Activated CD4-positive, alpha-beta memory T cell treated with anti-CD3 and anti-CD28 coated beads for 36 hours (primary cell): ENCODE measurements at regions of chr2 and their contacts with region 1.

Region 1: DNA sequence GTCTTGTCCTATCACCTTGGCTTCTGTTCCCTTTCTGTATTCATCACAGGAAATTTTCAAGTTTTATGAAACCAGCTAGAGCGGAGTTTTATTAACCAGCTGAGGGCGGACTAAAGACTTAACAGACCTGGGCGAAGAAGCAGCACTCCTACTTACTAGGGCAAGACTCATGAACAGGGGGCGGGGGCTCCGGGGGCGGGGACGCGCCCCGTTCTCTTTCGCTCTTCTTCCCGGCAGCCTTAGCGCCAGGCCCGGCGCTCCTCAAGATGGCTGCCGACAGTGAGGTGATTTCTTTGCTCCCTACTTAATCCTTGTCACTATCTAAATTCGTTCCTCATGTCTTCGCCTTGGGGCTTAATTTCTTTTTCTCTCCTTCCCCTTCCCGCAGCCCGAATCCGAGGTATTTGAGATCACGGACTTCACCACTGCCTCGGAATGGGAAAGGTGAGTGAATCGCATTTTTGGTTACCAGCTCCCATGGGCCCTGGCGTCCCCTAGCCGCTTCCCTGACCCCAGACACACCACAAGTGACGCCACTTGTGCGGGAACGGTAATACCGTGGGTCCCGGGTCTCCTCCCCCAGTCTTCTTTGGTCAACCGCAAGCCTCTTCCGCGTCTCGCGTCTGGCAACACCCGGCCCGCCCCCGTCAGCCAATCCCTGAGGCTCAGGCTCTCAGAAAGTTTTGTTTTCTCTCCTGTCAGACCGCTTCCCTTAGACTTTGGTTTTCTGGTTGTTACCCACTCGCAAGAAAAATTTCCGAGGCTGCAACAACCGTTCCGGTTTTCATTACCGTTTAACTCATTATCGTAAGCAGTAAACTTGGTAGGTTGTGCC is at the start of gene RAB3GAP1:
- DNase-seq: peak; percentile 97
- H3K4me3 Mint-ChIP-seq: peak within 1 kb of the TSS; percentile 98
- H3K27ac Mint-ChIP-seq: peak within 1 kb of the TSS; percentile 100
- H3K4me1 Mint-ChIP-seq: peaks cover 39% of the 10 kb centered on the region
- H3K27me3 Mint-ChIP-seq: no peaks in the 10 kb centered on the region
- total RNA-seq, gene RAB3GAP1: 29.6 to 30.7 TPM

Region 2: DNA sequence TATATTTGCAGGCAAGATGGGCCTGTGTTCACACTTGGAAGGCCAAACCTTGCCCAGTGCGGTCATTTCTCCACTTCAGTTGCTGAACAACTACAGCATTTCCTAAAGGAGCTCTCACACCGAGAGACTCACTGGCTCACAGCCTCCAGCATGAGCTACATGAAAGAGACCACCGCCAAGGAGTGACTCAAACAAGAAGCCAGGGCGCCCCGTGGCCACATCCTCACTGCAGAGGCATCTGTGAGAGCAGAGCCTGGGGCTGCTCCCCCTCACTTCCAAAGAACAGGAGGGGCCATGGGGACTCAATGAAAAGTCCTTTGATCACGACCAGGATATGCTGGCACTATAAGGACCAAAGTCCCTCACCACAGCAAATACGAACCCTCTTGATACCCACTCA is 383.4 kb before region 1 on chr2:
- CTCF ChIA-PET with region 1: no interaction called
- POLR2A ChIA-PET with region 1: no interaction called
- intact Hi-C with region 1: loop called (anchors 10 kb)
- DNase-seq: peak; percentile 95
- H3K4me3 Mint-ChIP-seq: no peak overlapping the region
- H3K27ac Mint-ChIP-seq: peak overlapping the region; percentile 13
- H3K4me1 Mint-ChIP-seq: peaks cover 65% of the 10 kb centered on the region
- H3K27me3 Mint-ChIP-seq: peaks cover 10% of the 10 kb centered on the region

Region 3: GRCh38 chr2:135010200-135010942 is 41.9 kb before region 1 on chr2:
- CTCF ChIA-PET with region 1: interaction called, 23 read pairs
- POLR2A ChIA-PET with region 1: interaction called, 5 read pairs
- intact Hi-C with region 1: loop called (anchors 1 kb)
- DNase-seq: no peak
- H3K4me3 Mint-ChIP-seq: no peak overlapping the region
- H3K27ac Mint-ChIP-seq: no peak overlapping the region
- H3K4me1 Mint-ChIP-seq: peaks cover 14% of the 10 kb centered on the region
- H3K27me3 Mint-ChIP-seq: peaks cover 16% of the 10 kb centered on the region

Region 4: DNA sequence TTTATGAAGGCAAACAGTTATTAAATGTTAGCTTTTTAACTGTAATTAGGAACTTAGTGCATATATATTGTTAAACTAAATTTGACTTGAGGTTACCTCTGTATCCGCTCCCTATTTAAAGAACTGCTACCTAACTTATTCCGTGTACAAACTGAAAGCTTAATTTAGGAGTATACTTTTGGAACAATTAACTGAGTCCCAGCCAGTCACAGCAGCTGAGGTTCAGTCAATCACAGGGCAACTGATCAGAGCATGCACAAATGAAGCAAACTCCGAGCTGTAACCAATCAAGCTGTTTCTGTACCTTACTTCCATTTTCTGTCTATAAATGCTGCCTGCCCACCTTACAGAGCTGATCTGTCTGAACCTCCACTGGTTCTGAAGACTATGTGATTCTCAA is 61.1 kb after region 1 on chr2:
- CTCF ChIA-PET with region 1: no interaction called
- POLR2A ChIA-PET with region 1: no interaction called
- intact Hi-C with region 1: no loop called
- DNase-seq: no peak
- H3K4me3 Mint-ChIP-seq: no peak overlapping the region
- H3K27ac Mint-ChIP-seq: no peak overlapping the region
- H3K4me1 Mint-ChIP-seq: no peaks in the 10 kb centered on the region
- H3K27me3 Mint-ChIP-seq: no peaks in the 10 kb centered on the region

Region 5: DNA sequence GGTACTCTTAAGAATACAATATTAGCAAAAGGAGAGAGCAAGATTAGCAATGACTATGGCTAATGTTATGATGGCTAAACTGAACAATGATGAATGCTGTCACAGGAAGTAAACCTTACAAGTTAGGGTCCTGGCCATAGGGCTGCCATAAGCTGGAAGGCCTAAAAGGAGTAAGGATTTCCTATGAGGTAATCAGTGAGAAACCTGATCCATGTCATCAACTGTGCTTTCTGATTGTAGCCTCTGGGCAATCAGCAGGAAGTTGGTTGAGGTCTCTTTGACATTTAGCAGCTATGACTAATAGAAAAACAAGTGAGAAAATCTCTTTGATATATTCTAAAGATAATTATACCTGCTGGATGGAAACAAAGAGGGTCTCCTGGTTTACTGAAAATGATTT is 192.8 kb after region 1 on chr2:
- CTCF ChIA-PET with region 1: no interaction called
- POLR2A ChIA-PET with region 1: no interaction called
- intact Hi-C with region 1: loop called (anchors 1 kb)
- DNase-seq: peak; percentile 20
- H3K4me3 Mint-ChIP-seq: no peak overlapping the region
- H3K27ac Mint-ChIP-seq: no peak overlapping the region
- H3K4me1 Mint-ChIP-seq: peaks cover 4% of the 10 kb centered on the region
- H3K27me3 Mint-ChIP-seq: no peaks in the 10 kb centered on the region

Region 6: GRCh38 chr2:135741395-135742324 is 689.4 kb after region 1 on chr2 and contains the start of gene UBXN4:
- CTCF ChIA-PET with region 1: interaction called, 3 read pairs
- POLR2A ChIA-PET with region 1: no interaction called
- intact Hi-C with region 1: loop called (anchors 1 kb)
- DNase-seq: peak; percentile 98
- H3K4me3 Mint-ChIP-seq: peak within 1 kb of the TSS; percentile 96
- H3K27ac Mint-ChIP-seq: peak within 1 kb of the TSS; percentile 99
- H3K4me1 Mint-ChIP-seq: peaks cover 24% of the 10 kb centered on the region
- H3K27me3 Mint-ChIP-seq: no peaks in the 10 kb centered on the region
- total RNA-seq, gene UBXN4: 107 TPM

Region 7: DNA sequence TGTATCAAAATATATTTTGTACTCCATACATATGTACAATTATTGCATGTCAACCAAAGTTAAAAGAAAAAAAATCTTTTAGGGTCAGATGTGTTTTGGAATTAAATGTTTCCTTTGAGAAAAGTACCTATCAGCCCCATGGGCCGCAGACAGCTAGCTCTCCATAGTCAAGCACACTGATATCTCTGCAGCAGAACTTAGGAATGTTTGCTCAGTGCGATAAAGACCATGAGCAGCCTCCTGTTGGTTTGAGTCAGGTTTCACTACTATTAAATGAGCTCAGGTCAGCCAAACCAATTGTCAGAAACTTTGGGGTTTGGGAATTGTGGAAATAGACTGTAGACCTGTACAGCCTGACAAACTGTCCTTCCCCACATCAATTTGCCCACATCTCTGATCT is 751.0 kb after region 1 on chr2:
- CTCF ChIA-PET with region 1: no interaction called
- POLR2A ChIA-PET with region 1: no interaction called
- intact Hi-C with region 1: no loop called
- DNase-seq: no peak
- H3K4me3 Mint-ChIP-seq: no peak overlapping the region
- H3K27ac Mint-ChIP-seq: no peak overlapping the region
- H3K4me1 Mint-ChIP-seq: no peaks in the 10 kb centered on the region
- H3K27me3 Mint-ChIP-seq: no peaks in the 10 kb centered on the region